Right cardiac atrium (tissue), 5 donors: ENCODE measurements at regions of chr20 and their contacts with region 1.

Region 1: GRCh38 chr20:20083807-20084206 is 31.5 kb downstream of the CFAP61 start:
- DNase-seq: no peak
- ATAC-seq: peak; percentile 45 to 47
- H3K4me3 ChIP-seq: no peak overlapping the region
- H3K27ac ChIP-seq: no peak overlapping the region
- H3K4me1 ChIP-seq: no peaks in the 10 kb centered on the region
- H3K27me3 ChIP-seq: no peaks in the 10 kb centered on the region

Region 2: DNA sequence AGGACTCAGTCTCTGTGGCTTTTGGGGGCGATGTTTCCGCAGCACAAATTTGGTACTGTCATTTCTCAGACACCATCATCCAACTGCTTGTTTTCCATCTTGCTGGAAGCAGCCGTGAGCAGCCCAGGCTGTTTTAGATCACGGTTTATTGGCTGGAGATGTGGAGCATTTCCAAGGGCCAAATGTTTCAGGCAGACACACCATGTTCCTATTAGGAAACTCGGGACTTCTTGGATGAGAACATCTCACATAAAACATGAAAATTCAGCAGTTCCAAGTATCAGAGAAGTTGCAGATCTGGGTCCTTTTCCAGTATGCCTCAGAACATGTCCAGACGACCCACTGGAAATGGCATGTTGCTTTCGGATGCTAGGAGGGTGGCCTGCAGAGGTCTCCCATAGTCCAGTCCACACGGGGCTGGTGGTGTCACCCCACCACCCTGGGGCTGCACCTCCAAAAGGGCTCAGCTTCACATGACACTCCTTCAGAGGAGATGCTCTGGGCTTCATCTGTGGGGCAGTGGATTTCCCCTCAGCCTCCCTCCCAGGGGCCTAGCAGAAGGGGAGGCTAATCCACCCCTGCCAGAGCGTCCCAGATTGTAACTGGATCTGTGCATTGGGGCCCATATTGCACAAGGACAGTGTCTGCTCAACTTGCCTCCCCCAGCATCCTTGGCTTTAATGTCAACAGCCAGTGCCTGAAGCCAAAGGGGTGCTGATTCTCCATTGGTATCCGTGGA is 1093.9 kb before region 1 on chr20:
- intact Hi-C with region 1: no loop called
- DNase-seq: peak in 2 of 3 donors; percentile 42 to 77
- ATAC-seq: peak; percentile 54 to 83
- H3K4me3 ChIP-seq: no peak overlapping the region
- H3K27ac ChIP-seq: no peak overlapping the region
- H3K4me1 ChIP-seq: peaks cover 2% of the 10 kb centered on the region
- H3K27me3 ChIP-seq: no peaks in the 10 kb centered on the region

Region 3: DNA sequence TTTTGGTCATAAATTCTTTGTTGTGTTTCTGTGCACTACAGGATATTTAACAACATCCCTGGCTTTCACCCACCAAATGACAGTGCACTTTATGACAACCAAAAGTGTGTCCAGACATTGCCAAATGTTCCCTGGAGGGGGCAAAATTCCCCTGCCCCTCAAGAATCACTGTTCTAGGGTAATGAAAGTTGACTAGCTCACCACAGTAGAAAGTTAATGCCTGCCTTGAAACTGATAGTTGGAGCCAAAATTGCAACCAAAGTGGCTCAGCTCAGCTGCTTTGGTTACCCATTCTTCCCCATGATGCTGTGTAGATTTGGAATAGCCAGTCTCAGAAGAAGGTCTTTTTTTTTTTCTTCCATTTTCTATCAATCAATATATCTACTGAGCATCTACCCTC is 478.0 kb after region 1 on chr20:
- intact Hi-C with region 1: loop called in 1 of 4 experiments (anchors 5 kb)
- DNase-seq: no peak
- ATAC-seq: no peak
- H3K4me3 ChIP-seq: no peak overlapping the region
- H3K27ac ChIP-seq: no peak overlapping the region
- H3K4me1 ChIP-seq: no peaks in the 10 kb centered on the region
- H3K27me3 ChIP-seq: no peaks in the 10 kb centered on the region